ENCODE measurements at regions of chr7 and their contacts with region 1.

Region 1: DNA sequence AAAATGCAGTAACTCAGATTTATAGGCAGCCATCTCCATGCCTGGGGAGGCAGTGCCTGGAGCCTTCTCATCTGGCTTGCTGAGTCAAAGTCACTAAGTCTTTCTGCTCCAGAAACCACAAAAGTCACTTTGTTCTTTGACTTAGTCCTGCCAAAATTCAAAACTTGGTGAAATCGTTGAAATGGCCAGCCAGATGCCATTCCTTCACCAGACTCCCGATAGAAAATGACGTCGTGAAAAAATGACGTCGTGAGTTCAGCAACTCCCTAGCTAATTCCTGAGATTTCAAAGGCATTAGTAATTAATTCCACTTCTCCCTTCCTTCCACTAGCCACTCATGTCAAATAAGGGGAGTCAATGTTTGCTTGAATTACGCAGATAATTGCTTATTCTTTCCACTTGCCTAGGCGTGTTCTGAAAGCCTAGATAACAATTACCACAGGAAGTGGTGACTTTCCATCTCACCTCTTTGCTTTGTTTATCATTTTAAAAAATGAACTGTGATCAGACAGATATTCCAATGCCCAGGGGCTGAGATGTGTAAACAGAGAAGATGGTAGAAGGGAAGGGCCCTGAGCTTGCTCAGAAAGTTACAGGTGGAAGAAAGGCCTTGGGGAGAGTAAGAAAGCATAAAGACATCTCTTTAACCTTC is 48.5 kb upstream of the OSBPL3 start:
- DNase-seq: peak; percentile 68
- H3K4me3 Mint-ChIP-seq: peak overlapping the region; percentile 26
- H3K27ac Mint-ChIP-seq: peak overlapping the region; percentile 96
- H3K4me1 Mint-ChIP-seq: peaks cover 94% of the 10 kb centered on the region
- H3K27me3 Mint-ChIP-seq: no peaks in the 10 kb centered on the region
- CTCF ChIP-seq: no peak

Region 2: GRCh38 chr7:24778543-24779282 is 249.8 kb before region 1 on chr7:
- CTCF ChIA-PET with region 1: no interaction called
- intact Hi-C with region 1: no loop called
- DNase-seq: no peak
- H3K4me3 Mint-ChIP-seq: no peak overlapping the region
- H3K27ac Mint-ChIP-seq: no peak overlapping the region
- H3K4me1 Mint-ChIP-seq: no peaks in the 10 kb centered on the region
- H3K27me3 Mint-ChIP-seq: no peaks in the 10 kb centered on the region
- CTCF ChIP-seq: no peak

Region 3: DNA sequence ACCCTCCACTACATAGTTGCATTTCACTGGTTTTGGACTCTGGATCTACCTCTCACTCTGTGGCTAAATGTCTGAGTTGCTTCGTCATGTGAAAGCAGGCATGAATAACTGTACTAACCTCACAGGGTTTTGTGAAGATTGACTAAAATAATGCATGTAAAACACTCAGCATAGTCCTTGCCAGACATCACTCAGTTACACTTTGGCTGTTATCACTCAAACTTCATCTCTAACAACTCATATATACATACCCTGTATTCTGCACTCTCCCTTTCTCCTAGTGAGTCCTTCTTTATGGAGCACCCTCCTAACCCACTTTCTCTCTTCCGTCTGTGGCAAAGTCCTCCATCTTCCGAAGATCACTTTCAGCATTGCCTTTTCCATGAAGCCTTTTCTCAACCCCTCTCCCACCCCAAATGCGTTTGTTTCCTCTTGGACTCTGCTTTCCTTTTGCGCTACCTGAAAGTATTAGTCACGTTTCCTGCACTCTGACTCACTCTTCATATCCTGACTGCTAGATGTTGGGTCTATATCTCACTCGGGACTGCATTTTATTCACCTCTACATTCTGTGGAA is 121.1 kb before region 1 on chr7:
- CTCF ChIA-PET with region 1: no interaction called
- intact Hi-C with region 1: loop called (anchors 5 kb)
- DNase-seq: peak; percentile 69
- H3K4me3 Mint-ChIP-seq: no peak overlapping the region
- H3K27ac Mint-ChIP-seq: no peak overlapping the region
- H3K4me1 Mint-ChIP-seq: peaks cover 23% of the 10 kb centered on the region
- H3K27me3 Mint-ChIP-seq: no peaks in the 10 kb centered on the region
- CTCF ChIP-seq: no peak

Region 4: DNA sequence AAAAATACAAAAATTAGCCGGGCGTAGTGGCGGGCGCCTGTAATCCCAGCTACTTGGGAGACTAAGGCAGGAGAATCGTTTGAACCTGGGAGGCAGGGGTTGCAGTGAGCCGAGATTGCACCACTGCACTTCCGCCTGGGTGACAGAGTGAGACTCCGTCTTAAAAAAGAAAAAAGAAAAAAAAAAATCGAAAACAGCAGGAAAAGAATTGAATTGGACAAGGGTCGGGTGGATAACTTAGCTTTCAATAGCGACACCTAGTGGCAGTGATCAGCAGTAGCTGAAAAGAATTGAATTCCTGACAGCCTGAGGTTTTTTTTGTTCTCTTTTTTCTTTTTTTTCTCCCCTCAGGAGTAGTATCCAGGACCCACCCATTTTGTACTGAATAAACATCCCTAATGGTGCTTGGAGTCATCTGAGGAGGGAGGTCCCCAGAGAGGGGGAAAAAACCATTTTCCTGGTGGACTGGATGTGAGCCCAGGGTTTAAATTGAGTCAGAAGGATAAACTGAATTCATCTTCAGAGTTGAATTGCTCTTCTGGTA is 41.5 kb after region 1 on chr7:
- CTCF ChIA-PET with region 1: interaction called, 8 read pairs
- intact Hi-C with region 1: loop called (anchors 1 kb)
- DNase-seq: peak; percentile 77
- H3K4me3 Mint-ChIP-seq: peak overlapping the region; percentile 21
- H3K27ac Mint-ChIP-seq: peak overlapping the region; percentile 35
- H3K4me1 Mint-ChIP-seq: peaks cover 39% of the 10 kb centered on the region
- H3K27me3 Mint-ChIP-seq: no peaks in the 10 kb centered on the region
- CTCF ChIP-seq: peak; percentile 74

Region 5: DNA sequence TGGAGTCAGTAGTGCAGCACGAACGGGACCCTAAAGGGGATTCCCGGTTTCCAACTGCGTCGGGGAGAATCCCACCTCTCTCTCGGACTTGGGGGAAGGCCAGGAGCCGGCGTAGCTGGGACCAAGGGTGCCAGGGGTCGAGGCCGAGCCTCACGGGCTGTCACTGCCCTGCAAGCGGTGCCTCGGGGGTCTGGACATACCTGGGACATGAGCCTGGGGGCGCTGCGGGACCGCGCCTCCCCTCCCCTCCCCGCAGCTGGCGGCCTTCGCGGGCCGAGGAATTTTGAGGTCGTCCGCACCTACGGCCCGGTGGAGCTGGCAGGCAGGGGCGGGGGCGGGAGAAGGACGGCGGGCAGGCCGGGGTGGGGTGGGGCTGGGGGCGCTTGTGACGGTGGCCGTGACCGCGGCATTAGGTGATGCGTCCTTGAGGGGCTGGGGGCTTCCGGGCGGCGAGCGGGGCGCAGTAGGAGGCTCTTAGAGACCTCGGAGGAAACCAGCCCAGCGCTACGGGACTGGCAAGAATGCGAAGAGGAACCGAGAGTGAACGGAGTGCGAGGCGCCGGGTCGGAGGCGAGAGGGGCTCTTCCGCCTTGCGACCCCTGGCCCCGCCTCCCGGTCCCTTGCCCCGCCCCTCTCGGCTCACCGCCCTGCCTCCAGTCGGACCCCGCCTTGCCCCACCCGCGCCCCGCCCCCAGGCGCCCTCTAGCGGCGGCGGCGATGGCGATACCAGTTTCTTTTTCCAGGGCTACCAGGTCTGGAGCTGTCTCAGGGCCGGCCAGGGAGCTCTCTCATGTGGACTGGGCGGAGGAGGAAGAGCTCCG is 151.5 kb after region 1 on chr7:
- CTCF ChIA-PET with region 1: no interaction called
- intact Hi-C with region 1: no loop called
- DNase-seq: peak; percentile 99
- H3K4me3 Mint-ChIP-seq: peak overlapping the region; percentile 83
- H3K27ac Mint-ChIP-seq: peak overlapping the region; percentile 57
- H3K4me1 Mint-ChIP-seq: no peaks in the 10 kb centered on the region
- H3K27me3 Mint-ChIP-seq: peaks cover 7% of the 10 kb centered on the region
- CTCF ChIP-seq: peak; percentile 99

Region 6: DNA sequence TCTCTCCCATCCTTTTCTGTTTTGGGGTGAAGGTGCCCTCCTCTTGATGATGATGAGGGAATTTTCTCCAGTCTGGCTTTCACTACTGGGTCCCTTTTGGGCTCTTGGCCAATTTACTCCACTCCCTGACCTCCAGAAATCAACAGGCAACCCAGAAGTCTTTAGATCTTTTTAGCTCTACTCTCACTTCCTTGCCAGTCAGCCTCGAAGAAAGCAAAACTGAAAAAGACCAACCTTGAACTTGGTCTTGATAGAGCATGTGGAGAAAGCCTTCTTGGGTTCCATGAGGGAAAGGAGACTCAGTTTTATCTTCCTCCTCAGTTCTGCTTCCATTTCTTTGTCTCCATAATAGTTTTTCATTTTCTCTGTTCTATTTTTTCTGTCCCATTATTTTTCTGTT is 291.2 kb after region 1 on chr7:
- CTCF ChIA-PET with region 1: no interaction called
- intact Hi-C with region 1: no loop called
- DNase-seq: no peak
- H3K4me3 Mint-ChIP-seq: no peak overlapping the region
- H3K27ac Mint-ChIP-seq: no peak overlapping the region
- H3K4me1 Mint-ChIP-seq: peaks cover 14% of the 10 kb centered on the region
- H3K27me3 Mint-ChIP-seq: peaks cover 42% of the 10 kb centered on the region
- CTCF ChIP-seq: no peak